Colonic mucosa (tissue), 4 donors: ENCODE measurements at regions of chr17 and their contacts with region 1.

Region 1: DNA sequence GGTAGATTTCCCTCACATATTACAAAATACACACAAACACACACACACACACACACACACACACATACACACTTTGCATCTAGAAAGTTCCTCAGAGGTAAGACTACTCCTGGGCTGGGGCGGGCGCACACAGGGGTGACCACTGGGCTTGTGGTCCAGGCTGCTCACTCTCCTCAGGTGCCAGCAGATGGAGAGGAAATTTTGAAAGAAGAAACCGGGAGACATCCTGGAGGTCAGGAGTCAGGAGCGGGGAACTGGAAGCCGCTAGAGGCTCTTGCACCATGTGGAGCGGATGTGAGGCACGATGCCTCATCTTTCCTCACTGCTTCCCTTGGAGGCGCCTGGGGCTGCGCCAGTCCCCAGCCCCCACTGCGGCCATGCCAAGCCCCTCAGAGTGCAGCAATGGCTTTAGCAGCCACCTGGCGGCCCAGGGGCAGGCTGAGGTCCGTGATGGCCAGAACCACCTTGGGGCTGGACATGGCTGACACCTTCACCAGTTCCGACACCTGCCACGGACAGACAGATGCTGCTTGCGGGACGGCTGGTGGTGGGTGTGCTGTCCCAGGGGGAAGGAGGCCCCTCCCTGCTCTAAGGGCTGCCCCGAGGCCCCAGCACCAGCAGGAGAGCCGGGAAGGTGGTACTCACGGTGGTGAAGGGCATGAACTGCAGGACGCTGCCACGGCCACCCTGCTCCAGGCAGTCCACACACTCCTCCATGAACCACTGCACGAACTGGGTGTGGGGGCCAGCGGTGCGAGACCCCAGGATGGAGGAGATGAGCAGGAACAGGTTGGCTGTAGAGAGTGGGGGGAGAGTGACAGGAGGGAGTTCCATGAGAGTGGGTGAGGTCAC is 4.1 kb downstream of the CSF3 start:
- DNase-seq: no peak
- H3K4me3 ChIP-seq: no peak overlapping the region
- H3K27ac ChIP-seq: no peak overlapping the region
- H3K4me1 ChIP-seq: peaks cover 25% of the 10 kb centered on the region
- H3K27me3 ChIP-seq: no peaks in the 10 kb centered on the region
- CTCF ChIP-seq: no peak

Region 2: GRCh38 chr17:39979021-39979670 is 40.2 kb before region 1 on chr17:
- intact Hi-C with region 1: no loop called
- DNase-seq: no peak
- H3K4me3 ChIP-seq: no peak overlapping the region
- H3K27ac ChIP-seq: no peak overlapping the region
- H3K4me1 ChIP-seq: no peaks in the 10 kb centered on the region
- H3K27me3 ChIP-seq: no peaks in the 10 kb centered on the region
- CTCF ChIP-seq: no peak

Region 3: DNA sequence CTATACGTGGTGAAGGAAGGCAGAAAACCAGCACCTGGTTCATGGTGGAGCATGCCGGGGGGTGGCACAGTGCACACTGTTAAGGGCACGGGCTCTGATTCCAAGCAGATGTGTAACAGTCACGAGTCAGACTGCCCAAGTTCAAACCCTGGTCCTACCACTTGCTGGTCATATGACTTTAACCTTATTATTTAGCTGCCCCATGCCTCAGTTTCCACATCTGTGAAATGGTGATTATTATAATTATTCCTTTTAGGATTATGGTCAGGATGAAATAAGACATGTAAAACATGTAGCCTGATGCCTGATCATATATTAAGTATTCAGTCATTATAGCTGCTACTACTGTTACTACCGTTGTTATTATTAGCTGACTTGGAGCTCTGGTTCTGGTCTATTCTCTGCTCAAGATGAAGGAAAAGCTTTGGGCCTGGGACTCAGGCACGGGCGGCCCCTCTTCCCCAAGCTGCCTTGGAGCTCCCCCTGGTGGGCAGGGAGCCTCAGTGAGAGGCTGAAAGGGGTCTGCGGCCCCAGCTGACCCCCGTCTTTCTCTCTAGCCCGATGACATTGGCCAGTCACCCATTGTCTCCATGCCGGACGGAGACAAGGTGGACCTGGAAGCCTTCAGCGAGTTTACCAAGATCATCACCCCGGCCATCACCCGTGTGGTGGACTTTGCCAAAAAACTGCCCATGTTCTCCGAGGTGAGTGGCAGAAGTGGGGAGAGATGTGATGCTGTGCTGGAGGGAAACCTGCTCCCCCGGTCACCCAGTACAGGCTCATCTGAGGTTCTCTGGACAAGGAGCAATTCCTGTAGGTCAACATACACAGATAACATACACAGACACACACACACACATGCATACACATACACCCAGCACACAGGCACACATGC is 67.0 kb after region 1 on chr17:
- intact Hi-C with region 1: loop called (anchors 5 kb)
- DNase-seq: no peak
- H3K4me3 ChIP-seq: no peak overlapping the region
- H3K27ac ChIP-seq: no peak overlapping the region
- H3K4me1 ChIP-seq: no peaks in the 10 kb centered on the region
- H3K27me3 ChIP-seq: no peaks in the 10 kb centered on the region
- CTCF ChIP-seq: peak; percentile 78

Region 4: DNA sequence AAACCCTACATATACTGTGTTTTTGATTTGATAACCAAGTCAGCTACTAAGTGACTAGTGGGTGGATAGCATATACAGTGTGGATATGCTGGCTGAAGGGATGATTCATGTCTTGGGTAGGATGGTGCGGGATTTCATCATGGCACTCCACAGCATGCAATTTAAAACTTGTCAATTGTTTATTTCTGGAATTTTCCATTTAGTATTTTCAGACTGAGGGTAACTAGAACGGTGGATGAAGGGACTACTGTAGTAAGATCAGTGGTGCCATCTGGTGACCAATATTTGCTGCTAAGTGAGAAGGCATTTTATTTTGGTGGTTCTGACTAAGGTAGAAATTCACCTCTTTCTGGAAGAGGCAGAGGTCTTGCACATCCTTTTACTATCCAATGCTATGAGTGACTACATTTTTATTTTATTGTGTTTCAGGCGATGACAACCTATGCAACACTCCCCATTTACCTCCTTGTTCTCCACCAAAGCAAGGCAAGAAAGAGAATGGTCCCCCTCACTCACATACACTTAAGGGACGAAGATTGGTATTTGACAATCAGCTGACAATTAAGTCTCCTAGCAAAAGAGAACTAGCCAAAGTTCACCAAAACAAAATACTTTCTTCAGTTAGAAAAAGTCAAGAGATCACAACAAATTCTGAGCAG is 271.4 kb after region 1 on chr17:
- intact Hi-C with region 1: loop called (anchors 10 kb)
- DNase-seq: peak; percentile 54
- H3K4me3 ChIP-seq: no peak overlapping the region
- H3K27ac ChIP-seq: no peak overlapping the region
- H3K4me1 ChIP-seq: no peaks in the 10 kb centered on the region
- H3K27me3 ChIP-seq: no peaks in the 10 kb centered on the region
- CTCF ChIP-seq: peak; percentile 57